Activated B cell treated with CpG ODN at 0.5 μM for 24 hours (primary cell): ENCODE measurements at regions of chr18 and their contacts with region 1.

Region 1: GRCh38 chr18:63422087-63422809 is at the start of gene VPS4B:
- DNase-seq: peak; percentile 100
- ATAC-seq: peak; percentile 96
- H3K4me3 Mint-ChIP-seq: peak within 1 kb of the TSS; percentile 99
- H3K27ac Mint-ChIP-seq: peak within 1 kb of the TSS; percentile 98
- H3K4me1 Mint-ChIP-seq: peaks cover 37% of the 10 kb centered on the region
- H3K27me3 Mint-ChIP-seq: peaks cover 2% of the 10 kb centered on the region
- CTCF ChIP-seq: no peak
- total RNA-seq, gene VPS4B: 66.2 and 66.8 TPM in 2 replicates

Region 2: GRCh38 chr18:62324917-62325805 is 1097.1 kb before region 1 on chr18 and contains the start of gene TNFRSF11A:
- CTCF ChIA-PET with region 1: no interaction called
- POLR2A ChIA-PET with region 1: no interaction called
- intact Hi-C with region 1: loop called (anchors 10 kb)
- DNase-seq: peak; percentile 61
- ATAC-seq: peak; percentile 93
- H3K4me3 Mint-ChIP-seq: peak within 1 kb of the TSS; percentile 76
- H3K27ac Mint-ChIP-seq: no peak within 1 kb of the TSS
- H3K4me1 Mint-ChIP-seq: peaks cover 21% of the 10 kb centered on the region
- H3K27me3 Mint-ChIP-seq: peaks cover 50% of the 10 kb centered on the region
- CTCF ChIP-seq: no peak
- total RNA-seq, gene TNFRSF11A: 0.07 and 0.24 TPM in 2 replicates

Region 3: GRCh38 chr18:62863579-62864001 is 558.7 kb before region 1 on chr18:
- CTCF ChIA-PET with region 1: no interaction called
- POLR2A ChIA-PET with region 1: no interaction called
- intact Hi-C with region 1: loop called (anchors 10 kb)
- DNase-seq: no peak
- ATAC-seq: no peak
- H3K4me3 Mint-ChIP-seq: no peak overlapping the region
- H3K27ac Mint-ChIP-seq: no peak overlapping the region
- H3K4me1 Mint-ChIP-seq: no peaks in the 10 kb centered on the region
- H3K27me3 Mint-ChIP-seq: no peaks in the 10 kb centered on the region
- CTCF ChIP-seq: no peak

Region 4: DNA sequence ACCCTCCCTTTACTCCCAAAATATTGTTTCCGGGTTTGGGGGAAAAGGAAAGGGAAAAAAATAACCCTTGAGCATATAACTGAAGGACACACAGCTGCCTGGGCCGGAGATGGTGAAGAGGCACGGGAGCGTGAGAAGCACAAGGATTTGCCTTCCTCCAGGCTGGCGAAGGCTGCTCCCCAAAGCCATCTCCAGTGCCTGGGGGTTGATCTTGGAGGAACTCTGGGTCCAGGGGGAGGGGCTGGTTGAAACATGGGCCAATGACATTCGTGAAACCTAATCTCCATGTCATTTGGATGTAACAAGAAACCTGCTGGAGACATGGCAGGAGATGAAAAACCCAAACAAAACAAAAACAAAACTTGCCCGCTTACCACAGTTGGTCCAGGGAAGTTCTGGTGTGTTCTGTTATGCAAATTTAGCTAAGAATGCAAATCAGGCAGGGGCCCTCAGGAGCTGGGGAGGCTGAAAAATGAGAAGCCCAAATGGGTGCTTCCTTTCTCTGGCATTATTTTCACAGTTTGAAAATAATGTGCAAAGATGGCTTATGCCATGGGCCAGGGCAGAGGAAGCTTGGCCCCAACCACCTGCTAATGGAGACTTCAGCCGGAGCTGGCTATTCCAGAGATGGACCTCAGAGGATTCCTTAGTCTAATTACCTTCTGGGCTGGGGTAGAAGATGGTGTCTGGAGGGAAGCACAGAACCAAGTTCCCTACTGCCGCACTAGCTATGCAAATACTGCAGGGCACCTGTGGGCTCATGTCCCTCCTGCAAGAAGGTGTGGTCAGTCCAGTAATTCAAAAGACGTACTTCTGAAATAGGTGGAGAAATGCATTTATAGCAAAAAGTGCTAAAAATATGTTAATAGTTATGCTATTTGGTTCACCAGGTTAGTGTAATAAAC is 283.6 kb before region 1 on chr18:
- CTCF ChIA-PET with region 1: no interaction called
- POLR2A ChIA-PET with region 1: no interaction called
- intact Hi-C with region 1: loop called (anchors 2 kb)
- DNase-seq: no peak
- ATAC-seq: peak; percentile 47
- H3K4me3 Mint-ChIP-seq: peak overlapping the region; percentile 82
- H3K27ac Mint-ChIP-seq: peak overlapping the region; percentile 90
- H3K4me1 Mint-ChIP-seq: peaks cover 86% of the 10 kb centered on the region
- H3K27me3 Mint-ChIP-seq: no peaks in the 10 kb centered on the region
- CTCF ChIP-seq: no peak

Region 5: DNA sequence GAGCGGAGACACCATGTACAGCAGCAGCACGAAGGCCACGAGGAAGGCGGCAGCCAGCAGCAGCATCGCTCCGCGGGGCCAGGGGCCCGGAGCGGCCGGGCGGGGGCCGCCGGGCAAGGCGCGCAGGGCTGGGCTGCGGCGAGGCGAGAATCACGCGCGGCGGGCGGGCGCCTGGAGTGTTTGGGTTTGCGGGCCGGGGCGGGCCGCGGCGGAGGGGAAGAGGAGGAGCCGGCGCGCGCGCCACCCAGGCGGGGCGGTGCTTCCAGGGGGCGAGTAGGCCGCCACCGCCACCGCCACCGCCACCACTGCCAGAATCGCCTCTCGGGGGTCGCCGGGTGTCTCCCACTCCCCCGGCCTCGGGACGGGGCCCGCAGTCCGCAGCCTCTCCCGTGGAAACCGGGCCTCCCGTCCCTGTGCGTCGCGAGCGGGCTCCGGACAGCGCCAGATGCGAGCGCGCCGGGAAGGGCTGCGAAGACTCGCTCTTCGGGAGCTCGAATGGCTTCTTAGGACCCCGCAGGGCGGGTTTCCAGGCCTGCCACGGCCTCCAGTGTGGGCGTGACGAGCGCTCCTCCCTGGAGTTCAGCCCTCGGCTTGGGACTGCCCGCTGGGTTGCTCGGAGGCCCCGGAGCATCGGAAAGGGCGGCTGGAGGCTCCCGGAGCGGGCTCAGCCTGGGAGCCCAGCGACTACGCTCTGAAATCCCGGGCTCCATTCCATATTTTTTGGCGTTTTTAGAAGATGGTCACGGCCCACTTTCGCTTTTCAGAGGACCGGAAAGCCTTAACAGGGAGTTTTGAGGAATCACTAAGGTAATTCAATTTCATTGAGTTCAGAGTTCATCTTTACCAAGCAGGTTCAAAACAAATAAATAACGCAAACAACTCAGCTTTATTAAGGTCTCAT is 54.9 kb before region 1 on chr18 and contains the start of gene KDSR:
- CTCF ChIA-PET with region 1: no interaction called
- POLR2A ChIA-PET with region 1: interaction called, 41 read pairs
- intact Hi-C with region 1: loop called (anchors 1 kb)
- DNase-seq: peak; percentile 88
- ATAC-seq: peak; percentile 92
- H3K4me3 Mint-ChIP-seq: peak within 1 kb of the TSS; percentile 88
- H3K27ac Mint-ChIP-seq: peak within 1 kb of the TSS; percentile 71
- H3K4me1 Mint-ChIP-seq: peaks cover 23% of the 10 kb centered on the region
- H3K27me3 Mint-ChIP-seq: no peaks in the 10 kb centered on the region
- CTCF ChIP-seq: no peak
- total RNA-seq, gene KDSR: 15.0 and 15.3 TPM in 2 replicates

Region 6: DNA sequence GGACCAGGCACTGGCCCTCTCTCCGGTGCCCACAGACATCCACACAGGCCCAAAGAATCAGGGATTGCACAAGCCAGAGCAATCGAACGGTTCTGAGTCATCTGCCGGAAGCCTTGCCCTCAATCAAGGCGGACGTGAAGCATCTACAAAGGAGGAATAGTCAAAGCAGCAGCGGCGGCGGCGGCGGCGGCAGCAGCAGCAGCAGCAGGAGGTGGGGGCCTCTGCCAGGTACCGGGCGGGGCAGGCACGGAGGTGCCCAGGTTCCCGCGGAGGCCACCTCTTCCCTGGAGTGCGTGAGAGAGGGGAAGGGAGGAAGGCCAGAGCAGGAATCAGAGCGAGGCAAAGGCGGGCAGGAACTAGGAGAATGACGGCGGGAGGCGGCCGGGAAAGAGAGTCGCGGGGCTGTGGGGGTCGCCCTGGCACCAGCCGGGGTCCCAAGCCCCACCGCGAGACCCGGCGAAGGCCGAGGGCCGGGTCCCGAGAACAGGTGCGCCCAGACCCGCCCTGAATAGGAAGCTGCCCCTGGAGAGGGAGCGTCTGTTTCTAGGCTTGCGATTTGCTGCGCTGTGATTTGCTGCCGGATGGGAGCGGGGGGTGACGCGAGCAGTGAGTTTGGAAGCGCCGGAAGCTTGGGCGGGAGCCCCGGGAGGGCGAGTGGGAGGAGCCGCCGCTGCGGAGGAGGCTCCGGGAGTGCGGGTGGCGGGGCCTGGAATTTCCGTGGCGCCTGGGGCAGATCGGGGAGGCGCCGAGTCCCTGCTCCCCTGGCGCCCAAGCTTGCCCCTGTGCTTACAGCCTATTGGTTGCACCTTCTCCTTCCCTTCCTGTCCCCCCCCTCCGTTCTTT is 547.9 kb after region 1 on chr18 and contains the start of gene SERPINB8:
- CTCF ChIA-PET with region 1: no interaction called
- POLR2A ChIA-PET with region 1: interaction called, 3 read pairs
- intact Hi-C with region 1: loop called (anchors 1 kb)
- DNase-seq: peak; percentile 71
- ATAC-seq: peak; percentile 82
- H3K4me3 Mint-ChIP-seq: peak within 1 kb of the TSS; percentile 95
- H3K27ac Mint-ChIP-seq: peak within 1 kb of the TSS; percentile 94
- H3K4me1 Mint-ChIP-seq: peaks cover 51% of the 10 kb centered on the region
- H3K27me3 Mint-ChIP-seq: peaks cover 6% of the 10 kb centered on the region
- CTCF ChIP-seq: no peak
- total RNA-seq, gene SERPINB8: 20.9 and 29.5 TPM in 2 replicates